ENCODE measurements at regions of chr1 and their contacts with region 1.

Region 1: DNA sequence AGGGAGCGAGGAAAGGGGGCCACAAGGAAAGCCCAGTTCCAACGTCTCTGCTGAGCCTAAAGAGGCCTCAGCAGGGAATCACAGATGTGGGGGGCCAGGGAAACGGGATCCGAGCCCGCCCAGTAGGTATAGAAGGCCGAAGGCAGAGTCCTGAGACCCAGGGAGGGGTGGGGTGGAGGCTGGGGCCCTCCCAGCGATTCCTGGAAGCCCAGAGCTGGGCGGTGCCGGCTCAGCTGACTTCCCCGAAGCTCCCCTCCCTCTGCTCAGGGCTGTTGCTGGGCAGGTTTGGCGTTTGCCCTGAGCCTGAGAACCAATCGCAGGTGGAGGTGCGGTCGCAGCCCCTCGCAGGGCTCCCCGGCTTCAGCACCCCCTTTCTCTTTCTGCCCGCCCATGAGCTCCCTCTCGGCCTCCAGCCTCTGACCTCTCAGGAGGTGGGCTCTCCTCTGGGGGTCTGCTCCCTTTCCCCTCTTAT is 12.8 kb downstream of the ADAMTSL4 start:
- DNase-seq: peak; percentile 96
- H3K4me3 Mint-ChIP-seq: peak overlapping the region; percentile 89
- H3K27ac Mint-ChIP-seq: peak overlapping the region; percentile 99
- H3K4me1 Mint-ChIP-seq: peaks cover 54% of the 10 kb centered on the region
- H3K27me3 Mint-ChIP-seq: no peaks in the 10 kb centered on the region

Region 2: DNA sequence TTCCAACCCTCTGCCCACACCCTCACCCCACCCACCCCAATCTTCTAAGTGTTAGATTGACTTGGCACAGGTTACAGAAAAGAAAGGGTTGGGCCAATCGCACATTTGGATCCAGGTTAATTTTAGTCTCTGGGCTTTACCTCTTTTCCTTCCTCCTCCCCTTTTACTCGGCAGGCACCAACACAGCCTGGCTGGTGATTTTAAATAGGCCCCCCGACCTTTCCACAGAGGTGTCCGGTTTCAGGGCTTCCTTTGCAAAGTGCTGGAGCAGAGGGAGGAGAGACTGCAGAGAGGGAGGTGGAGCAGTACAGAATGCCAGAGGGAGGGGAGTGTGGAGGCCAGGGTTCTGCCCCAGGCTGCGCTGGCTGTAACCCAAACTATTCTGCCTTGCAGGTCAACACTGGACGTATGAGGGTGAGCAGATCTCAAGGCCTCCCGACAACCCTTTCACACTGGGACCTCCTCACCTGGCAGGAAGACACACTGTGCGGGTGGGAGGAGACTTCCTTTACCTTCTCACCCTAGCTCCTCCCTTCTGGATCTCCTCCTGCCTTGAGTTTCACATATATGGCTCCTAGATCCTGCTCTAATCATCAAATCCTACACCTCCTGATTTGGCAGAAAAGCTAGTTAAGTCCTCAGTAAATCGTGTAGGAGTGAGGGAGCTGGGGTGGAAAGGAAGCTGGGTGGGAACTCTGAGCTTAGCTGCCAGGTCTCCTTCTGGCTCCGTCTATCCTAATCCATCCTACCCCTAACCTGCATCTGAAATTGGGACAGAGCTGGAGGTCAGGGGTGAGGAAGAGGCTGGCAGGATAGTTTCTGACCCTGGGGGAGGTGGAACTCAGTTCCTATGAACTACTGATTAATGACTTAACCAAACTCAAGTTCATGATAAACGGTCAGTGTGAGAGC is 302.0 kb before region 1 on chr1:
- CTCF ChIA-PET with region 1: interaction called, 11 read pairs
- POLR2A ChIA-PET with region 1: interaction called, 5 read pairs
- intact Hi-C with region 1: loop called (anchors 5 kb)
- DNase-seq: no peak
- H3K4me3 Mint-ChIP-seq: no peak overlapping the region
- H3K27ac Mint-ChIP-seq: no peak overlapping the region
- H3K4me1 Mint-ChIP-seq: peaks cover 18% of the 10 kb centered on the region
- H3K27me3 Mint-ChIP-seq: peaks cover 27% of the 10 kb centered on the region

Region 3: GRCh38 chr1:150548632-150549495 is 13.1 kb before region 1 on chr1 and contains the start of gene ADAMTSL4:
- CTCF ChIA-PET with region 1: interaction called, 51 read pairs
- POLR2A ChIA-PET with region 1: interaction called, 19 read pairs
- intact Hi-C with region 1: no loop called
- DNase-seq: peak; percentile 56
- H3K4me3 Mint-ChIP-seq: peak within 1 kb of the TSS; percentile 70
- H3K27ac Mint-ChIP-seq: no peak within 1 kb of the TSS
- H3K4me1 Mint-ChIP-seq: peaks cover 30% of the 10 kb centered on the region
- H3K27me3 Mint-ChIP-seq: peaks cover 30% of the 10 kb centered on the region
- total RNA-seq, gene ADAMTSL4: 1.1 TPM

Region 4: GRCh38 chr1:150621497-150622302 is 59.7 kb after region 1 on chr1:
- CTCF ChIA-PET with region 1: interaction called, 243 read pairs
- POLR2A ChIA-PET with region 1: interaction called, 147 read pairs
- intact Hi-C with region 1: loop called (anchors 1 kb)
- DNase-seq: peak; percentile 70
- H3K4me3 Mint-ChIP-seq: no peak overlapping the region
- H3K27ac Mint-ChIP-seq: peak overlapping the region; percentile 84
- H3K4me1 Mint-ChIP-seq: peaks cover 75% of the 10 kb centered on the region
- H3K27me3 Mint-ChIP-seq: no peaks in the 10 kb centered on the region

Region 5: DNA sequence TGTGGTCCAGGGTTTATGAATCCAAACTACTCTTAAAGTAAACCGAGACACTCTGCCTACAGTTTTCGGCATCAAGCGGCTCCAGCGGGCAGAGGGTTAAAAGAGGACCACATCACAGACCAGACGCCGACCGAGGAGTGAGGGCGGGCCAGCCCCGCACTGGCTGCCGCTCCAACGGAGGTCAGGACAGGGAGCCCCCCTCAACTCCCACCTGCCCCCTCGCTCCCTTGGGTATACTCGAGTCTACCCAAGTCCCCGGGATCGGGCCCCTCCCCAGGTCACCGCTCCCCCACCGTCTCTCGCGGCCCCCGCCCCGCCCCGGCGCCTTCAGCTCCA is 314.1 kb after region 1 on chr1:
- CTCF ChIA-PET with region 1: no interaction called
- POLR2A ChIA-PET with region 1: no interaction called
- intact Hi-C with region 1: loop called (anchors 5 kb)
- DNase-seq: no peak
- H3K4me3 Mint-ChIP-seq: peak overlapping the region; percentile 84
- H3K27ac Mint-ChIP-seq: peak overlapping the region; percentile 85
- H3K4me1 Mint-ChIP-seq: peaks cover 30% of the 10 kb centered on the region
- H3K27me3 Mint-ChIP-seq: no peaks in the 10 kb centered on the region

Region 6: GRCh38 chr1:151156515-151156819 is 594.5 kb after region 1 on chr1 and contains the start of gene TNFAIP8L2:
- CTCF ChIA-PET with region 1: interaction called, 3 read pairs
- POLR2A ChIA-PET with region 1: interaction called, 4 read pairs
- intact Hi-C with region 1: loop called (anchors 2 kb)
- DNase-seq: peak; percentile 91
- H3K4me3 Mint-ChIP-seq: peak within 1 kb of the TSS; percentile 97
- H3K27ac Mint-ChIP-seq: peak within 1 kb of the TSS; percentile 97
- H3K4me1 Mint-ChIP-seq: peaks cover 38% of the 10 kb centered on the region
- H3K27me3 Mint-ChIP-seq: no peaks in the 10 kb centered on the region
- total RNA-seq, gene TNFAIP8L2: 24.2 to 26.7 TPM